CD4-positive, alpha-beta T cell (primary cell): ENCODE measurements at regions of chr10 and their contacts with region 1.

Region 1: GRCh38 chr10:62779487-62780248 is 24.9 kb upstream of the ADO start:
- DNase-seq: peak; percentile 59 to 95 (median 71)
- ATAC-seq: peak; percentile 99
- H3K4me3 ChIP-seq: no peak overlapping the region
- H3K4me3 Mint-ChIP-seq: no peak overlapping the region
- H3K27ac ChIP-seq: no peak overlapping the region
- H3K27ac Mint-ChIP-seq: peak overlapping the region; percentile 34
- H3K4me1 ChIP-seq: peaks cover 16% of the 10 kb centered on the region
- H3K4me1 Mint-ChIP-seq: peaks cover 15% of the 10 kb centered on the region
- H3K27me3 ChIP-seq: no peaks in the 10 kb centered on the region
- H3K27me3 Mint-ChIP-seq: no peaks in the 10 kb centered on the region
- CTCF ChIP-seq: no peak

Region 2: GRCh38 chr10:62681211-62681940 is 98.3 kb before region 1 on chr10:
- CTCF ChIA-PET with region 1: interaction called, 4 read pairs
- POLR2A ChIA-PET with region 1: interaction called, 6 read pairs
- intact Hi-C with region 1: loop called in 1 of 2 experiments (anchors 5 kb)
- DNase-seq: peak; percentile 25 to 93 (median 45)
- ATAC-seq: peak; percentile 95
- H3K4me3 ChIP-seq: no peak overlapping the region
- H3K4me3 Mint-ChIP-seq: no peak overlapping the region
- H3K27ac ChIP-seq: no peak overlapping the region
- H3K27ac Mint-ChIP-seq: peak overlapping the region; percentile 2
- H3K4me1 ChIP-seq: peaks cover 15% of the 10 kb centered on the region
- H3K4me1 Mint-ChIP-seq: peaks cover 12% of the 10 kb centered on the region
- H3K27me3 ChIP-seq: no peaks in the 10 kb centered on the region
- H3K27me3 Mint-ChIP-seq: no peaks in the 10 kb centered on the region
- CTCF ChIP-seq: no peak

Region 3: DNA sequence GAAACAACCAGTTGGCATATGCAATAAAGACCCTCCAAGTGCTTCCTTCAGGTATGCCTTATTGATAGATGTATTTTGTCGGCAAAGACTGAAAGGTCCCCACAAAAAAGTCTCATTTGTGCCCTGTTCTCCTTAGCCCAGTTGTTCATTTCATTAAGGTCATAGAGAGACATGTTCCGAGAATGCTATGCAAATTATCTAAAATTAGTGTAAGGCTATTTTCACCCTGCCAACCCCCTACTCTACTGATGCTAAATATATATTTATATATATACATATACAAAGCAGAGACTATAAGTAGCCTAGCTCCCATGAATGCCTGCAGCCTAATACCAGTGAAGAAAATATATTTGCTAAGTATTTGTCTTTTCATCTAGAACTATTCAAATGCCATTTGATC is 71.9 kb before region 1 on chr10:
- CTCF ChIA-PET with region 1: no interaction called
- POLR2A ChIA-PET with region 1: no interaction called
- intact Hi-C with region 1: no loop called
- DNase-seq: no peak
- ATAC-seq: no peak
- H3K4me3 ChIP-seq: no peak overlapping the region
- H3K4me3 Mint-ChIP-seq: no peak overlapping the region
- H3K27ac ChIP-seq: no peak overlapping the region
- H3K27ac Mint-ChIP-seq: no peak overlapping the region
- H3K4me1 ChIP-seq: no peaks in the 10 kb centered on the region
- H3K4me1 Mint-ChIP-seq: no peaks in the 10 kb centered on the region
- H3K27me3 ChIP-seq: no peaks in the 10 kb centered on the region
- H3K27me3 Mint-ChIP-seq: no peaks in the 10 kb centered on the region
- CTCF ChIP-seq: no peak